ENCODE measurements at regions of chr19 and their contacts with region 1.

Region 1: GRCh38 chr19:44903602-44904425 is 1.8 kb upstream of the APOE start:
- DNase-seq: peak; percentile 87
- CTCF ChIP-seq: peak; percentile 97

Region 2: DNA sequence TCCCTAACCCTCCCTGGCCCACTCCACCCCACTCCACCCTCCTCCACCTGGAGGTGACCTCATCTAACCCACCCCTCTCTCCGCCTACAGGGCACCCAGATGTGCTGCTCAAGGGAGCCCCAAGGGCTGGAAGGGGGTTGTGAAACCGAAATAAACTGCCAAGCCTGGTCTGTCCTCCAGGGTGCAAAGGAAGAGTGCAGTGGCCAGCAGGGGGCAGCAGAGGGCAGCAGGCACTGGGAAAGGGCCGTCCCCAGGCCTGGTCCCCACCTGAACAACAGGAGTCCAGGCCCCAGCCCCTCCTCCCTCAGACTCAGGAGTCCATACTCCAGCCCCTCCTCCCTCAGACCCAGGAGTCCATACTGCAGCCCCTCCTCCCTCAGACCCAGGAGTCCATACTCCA is 103.4 kb before region 1 on chr19:
- CTCF ChIA-PET with region 1: no interaction called
- POLR2A ChIA-PET with region 1: no interaction called
- DNase-seq: peak; percentile 92
- CTCF ChIP-seq: peak; percentile 95

Region 3: DNA sequence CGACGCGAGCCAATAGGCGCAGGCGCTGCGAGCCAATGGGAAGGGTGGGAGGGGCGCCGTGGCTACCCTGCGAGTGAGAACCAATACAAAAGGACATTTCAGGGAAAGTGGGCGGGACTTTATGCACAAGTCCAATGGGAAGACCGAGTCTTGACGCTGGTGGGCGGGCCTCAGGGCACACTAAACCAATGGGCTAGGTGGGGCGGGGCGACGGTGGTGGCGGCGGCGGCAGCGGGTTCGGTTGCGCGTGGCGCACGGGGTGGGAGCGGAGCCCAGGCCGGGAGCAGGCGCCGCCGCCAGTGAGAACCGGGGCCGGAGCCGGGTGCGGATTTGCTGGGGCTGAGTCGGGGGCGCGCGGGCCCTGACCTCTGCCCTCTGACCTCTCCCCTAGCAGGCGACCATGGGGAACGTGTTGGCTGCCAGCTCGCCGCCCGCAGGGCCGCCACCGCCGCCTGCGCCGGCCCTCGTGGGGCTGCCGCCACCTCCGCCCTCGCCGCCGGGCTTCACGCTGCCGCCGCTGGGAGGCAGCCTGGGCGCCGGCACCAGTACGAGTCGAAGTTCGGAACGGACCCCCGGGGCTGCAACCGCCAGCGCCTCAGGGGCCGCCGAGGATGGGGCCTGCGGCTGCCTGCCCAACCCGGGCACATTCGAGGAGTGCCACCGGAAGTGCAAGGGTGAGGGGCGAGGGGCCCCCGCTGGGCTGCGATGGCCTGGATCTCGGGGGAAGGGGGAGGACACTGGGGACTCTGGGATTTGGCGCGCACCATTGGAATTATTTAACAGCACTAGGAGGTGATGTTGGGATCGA is 12.6 kb before region 1 on chr19 and contains the start of gene TOMM40:
- CTCF ChIA-PET with region 1: interaction called, 10 read pairs
- POLR2A ChIA-PET with region 1: interaction called, 8 read pairs
- DNase-seq: no peak
- CTCF ChIP-seq: no peak